A673 (cell line): ENCODE measurements at regions of chr1 and their contacts with region 1.

Region 1: DNA sequence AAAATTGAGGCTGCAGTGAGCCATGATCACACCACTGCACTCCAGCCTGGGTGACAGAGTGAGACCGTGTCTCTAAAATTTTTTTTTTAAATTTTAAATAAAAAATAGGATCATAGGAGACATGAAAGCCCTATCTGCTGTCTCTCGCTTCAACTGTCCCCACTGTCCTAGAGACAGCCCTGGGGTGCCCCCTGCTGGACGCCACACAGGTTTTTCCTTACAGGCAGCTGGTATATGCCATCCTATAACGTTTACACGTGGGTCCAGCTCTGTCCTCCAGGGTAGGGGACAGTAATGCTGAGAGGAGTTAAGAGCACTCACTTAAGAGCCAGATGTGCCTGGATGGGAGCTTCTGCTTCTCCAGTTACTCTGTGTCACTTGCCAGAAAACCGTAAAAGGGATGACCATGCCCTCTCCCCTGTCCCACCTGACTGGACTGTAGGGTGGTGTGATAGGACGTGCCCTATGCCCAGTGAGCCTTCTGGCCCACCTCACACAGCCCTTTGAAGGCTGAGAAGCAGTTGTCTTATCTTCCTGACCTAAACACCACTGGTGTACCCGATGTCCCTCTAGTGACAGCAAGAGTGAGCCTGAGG is 8.5 kb downstream of the FBXO2 start:
- DNase-seq: peak; percentile 90
- H3K4me3 ChIP-seq: no peak overlapping the region
- H3K27ac ChIP-seq: no peak overlapping the region
- H3K4me1 ChIP-seq: peaks cover 15% of the 10 kb centered on the region
- H3K27me3 ChIP-seq: peaks cover 2% of the 10 kb centered on the region
- CTCF ChIP-seq: peak; percentile 85

Region 2: DNA sequence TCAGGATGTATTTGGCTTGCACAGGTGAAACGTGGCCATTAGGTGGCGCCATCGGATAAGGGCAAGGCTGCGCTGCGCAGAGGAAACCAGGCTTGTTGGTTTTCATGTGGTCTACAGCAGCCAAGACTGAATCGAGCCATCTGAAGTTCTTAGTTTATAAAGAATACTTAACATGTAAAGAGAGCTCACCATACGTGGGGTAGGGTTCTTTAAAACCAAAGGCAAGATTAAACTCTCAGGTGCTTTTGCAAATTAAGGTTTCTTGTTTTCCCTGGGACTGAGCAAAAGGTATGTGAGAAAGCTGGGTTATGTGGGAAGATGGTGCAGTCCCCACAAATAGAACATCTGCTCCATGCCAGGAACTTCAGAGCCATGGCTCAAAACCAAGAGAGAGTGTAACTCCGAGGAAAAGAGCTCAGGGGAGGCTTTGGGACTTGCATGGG is 608.0 kb before region 1 on chr1:
- CTCF ChIA-PET with region 1: interaction called, 21 read pairs
- POLR2A ChIA-PET with region 1: no interaction called
- intact Hi-C with region 1: loop called (anchors 1 kb)
- DNase-seq: peak; percentile 90
- H3K4me3 ChIP-seq: no peak overlapping the region
- H3K27ac ChIP-seq: no peak overlapping the region
- H3K4me1 ChIP-seq: no peaks in the 10 kb centered on the region
- H3K27me3 ChIP-seq: no peaks in the 10 kb centered on the region
- CTCF ChIP-seq: peak; percentile 99

Region 3: DNA sequence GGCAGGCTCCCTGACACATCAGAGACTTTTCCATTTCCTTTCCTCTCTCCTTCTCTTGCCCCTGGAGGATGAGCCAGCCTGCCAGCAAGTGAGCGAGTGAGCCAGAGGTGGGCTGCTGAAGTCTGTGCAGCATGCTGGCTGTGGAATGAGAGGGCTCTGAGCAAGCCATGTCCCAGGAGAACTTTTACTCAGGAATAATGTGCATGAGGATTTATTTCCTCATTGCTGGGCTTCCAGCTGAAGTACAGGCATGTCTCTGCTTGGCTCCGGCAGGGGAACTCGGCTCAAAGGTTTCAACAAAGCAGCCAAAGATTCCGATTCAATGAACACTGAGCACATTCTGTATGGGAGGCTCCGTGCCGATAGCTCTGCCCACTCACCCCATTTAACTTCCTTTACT is 329.1 kb before region 1 on chr1:
- CTCF ChIA-PET with region 1: no interaction called
- POLR2A ChIA-PET with region 1: no interaction called
- intact Hi-C with region 1: loop called (anchors 5 kb)
- DNase-seq: no peak
- H3K4me3 ChIP-seq: no peak overlapping the region
- H3K27ac ChIP-seq: no peak overlapping the region
- H3K4me1 ChIP-seq: no peaks in the 10 kb centered on the region
- H3K27me3 ChIP-seq: peaks cover 5% of the 10 kb centered on the region
- CTCF ChIP-seq: no peak

Region 4: GRCh38 chr1:11337580-11338073 is 308.1 kb before region 1 on chr1:
- CTCF ChIA-PET with region 1: interaction called, 3 read pairs
- POLR2A ChIA-PET with region 1: no interaction called
- intact Hi-C with region 1: loop called (anchors 1 kb)
- DNase-seq: peak; percentile 70
- H3K4me3 ChIP-seq: no peak overlapping the region
- H3K27ac ChIP-seq: no peak overlapping the region
- H3K4me1 ChIP-seq: peaks cover under 1% of the 10 kb centered on the region
- H3K27me3 ChIP-seq: peaks cover 26% of the 10 kb centered on the region
- CTCF ChIP-seq: peak; percentile 93

Region 5: GRCh38 chr1:11478571-11479374 is 167.0 kb before region 1 on chr1 and contains the start of gene DISP3:
- CTCF ChIA-PET with region 1: no interaction called
- POLR2A ChIA-PET with region 1: no interaction called
- intact Hi-C with region 1: loop called (anchors 2 kb)
- DNase-seq: peak; percentile 92
- H3K4me3 ChIP-seq: peak within 1 kb of the TSS; percentile 54
- H3K27ac ChIP-seq: peak within 1 kb of the TSS; percentile 97
- H3K4me1 ChIP-seq: peaks cover 9% of the 10 kb centered on the region
- H3K27me3 ChIP-seq: peaks cover 80% of the 10 kb centered on the region
- CTCF ChIP-seq: peak; percentile 66
- total RNA-seq, gene DISP3: 0.49 and 0.79 TPM in 2 replicates

Region 6: DNA sequence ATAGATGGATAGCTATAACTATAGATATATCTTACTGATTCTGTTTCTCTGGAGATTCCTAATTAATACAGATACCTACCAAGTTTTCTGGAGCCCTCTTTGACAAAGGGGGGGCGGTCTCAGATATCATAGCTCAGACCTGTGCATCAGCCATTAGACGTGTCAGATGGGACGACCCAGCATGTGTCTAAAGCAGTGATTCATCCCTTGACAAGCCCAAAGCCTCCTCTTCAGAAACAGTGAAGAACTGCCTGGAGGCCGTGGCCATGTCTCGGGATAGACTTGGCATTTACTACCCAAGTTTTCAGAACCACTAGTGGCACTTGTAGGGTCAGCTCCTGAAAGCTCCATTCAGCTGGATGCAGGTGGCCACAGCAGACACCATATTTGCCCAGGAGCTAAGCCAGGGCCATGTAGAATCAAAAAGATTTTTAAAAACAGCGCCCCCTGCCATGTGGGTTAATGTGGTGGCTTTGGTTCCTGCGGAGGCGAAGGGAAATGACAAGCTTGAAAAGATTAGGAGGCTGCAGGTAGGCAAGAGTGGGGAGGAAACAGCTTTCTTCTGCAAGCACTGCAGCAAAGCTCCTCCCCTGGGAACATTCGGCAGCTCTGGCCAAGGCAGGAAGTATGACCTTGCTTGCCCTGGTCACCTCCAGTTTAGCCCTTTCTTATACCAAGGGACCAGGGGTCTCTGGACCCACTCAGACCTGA is 73.7 kb before region 1 on chr1:
- CTCF ChIA-PET with region 1: no interaction called
- POLR2A ChIA-PET with region 1: no interaction called
- intact Hi-C with region 1: no loop called
- DNase-seq: peak; percentile 15
- H3K4me3 ChIP-seq: no peak overlapping the region
- H3K27ac ChIP-seq: no peak overlapping the region
- H3K4me1 ChIP-seq: no peaks in the 10 kb centered on the region
- H3K27me3 ChIP-seq: peaks cover 56% of the 10 kb centered on the region
- CTCF ChIP-seq: peak; percentile 50

Region 7: DNA sequence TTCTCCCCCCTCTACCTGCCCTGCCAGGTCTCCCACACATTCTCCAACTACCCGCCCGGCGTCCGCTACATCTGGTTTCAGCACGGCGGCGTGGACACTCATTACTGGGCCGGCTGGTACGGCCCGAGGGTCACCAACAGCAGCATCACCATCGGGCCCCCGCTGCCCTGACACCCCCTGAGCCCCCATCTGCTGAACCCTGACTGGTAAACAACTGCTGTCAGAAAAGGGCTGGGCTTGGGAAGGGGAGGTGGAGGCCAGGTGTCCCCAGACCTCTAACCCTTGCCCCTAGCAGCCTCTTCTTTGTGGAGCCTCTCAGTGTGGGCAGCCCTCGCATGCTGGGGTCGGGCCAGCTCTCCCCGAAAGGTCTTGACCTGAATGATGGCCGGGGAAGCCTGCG is 15.3 kb after region 1 on chr1:
- CTCF ChIA-PET with region 1: interaction called, 23 read pairs
- POLR2A ChIA-PET with region 1: no interaction called
- intact Hi-C with region 1: no loop called
- DNase-seq: no peak
- H3K4me3 ChIP-seq: no peak overlapping the region
- H3K27ac ChIP-seq: no peak overlapping the region
- H3K4me1 ChIP-seq: no peaks in the 10 kb centered on the region
- H3K27me3 ChIP-seq: no peaks in the 10 kb centered on the region
- CTCF ChIP-seq: no peak

Region 8: DNA sequence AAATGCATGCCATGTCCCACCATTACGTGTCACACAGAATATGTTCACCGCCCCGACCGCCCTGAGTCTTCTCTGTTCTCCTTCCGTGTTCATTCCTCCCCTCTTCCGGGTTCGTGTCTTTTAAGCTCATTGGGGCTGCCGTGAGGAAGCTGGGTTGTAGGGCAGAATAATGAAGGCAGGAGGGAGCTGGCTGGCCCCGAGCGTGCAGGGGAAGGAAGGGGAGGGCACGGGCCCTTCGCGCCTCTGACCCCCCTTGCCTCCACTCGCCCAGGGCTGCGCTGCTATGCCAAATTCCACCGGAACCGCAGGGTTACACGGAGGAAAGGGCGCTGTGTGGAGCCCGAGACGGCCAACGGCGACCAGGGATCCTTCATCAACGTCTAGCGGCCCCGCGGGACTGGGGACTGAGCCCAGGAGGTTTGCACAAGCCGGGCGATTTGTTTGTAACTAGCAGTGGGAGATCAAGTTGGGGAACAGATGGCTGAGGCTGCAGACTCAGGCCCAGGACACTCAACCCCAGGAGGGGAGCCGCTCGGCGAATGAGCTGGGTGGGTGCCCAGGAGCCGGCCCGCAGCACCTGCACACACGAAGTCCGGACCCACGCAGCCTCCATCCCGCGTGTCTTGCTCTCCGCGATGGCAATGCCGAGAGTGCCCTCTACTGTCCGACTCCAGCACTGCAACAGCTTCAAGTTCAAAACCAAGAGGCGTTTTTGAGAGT is 73.7 kb after region 1 on chr1:
- CTCF ChIA-PET with region 1: interaction called, 6 read pairs
- POLR2A ChIA-PET with region 1: no interaction called
- intact Hi-C with region 1: loop called (anchors 2 kb)
- DNase-seq: peak; percentile 63
- H3K4me3 ChIP-seq: peak overlapping the region; percentile 23
- H3K27ac ChIP-seq: no peak overlapping the region
- H3K4me1 ChIP-seq: no peaks in the 10 kb centered on the region
- H3K27me3 ChIP-seq: no peaks in the 10 kb centered on the region
- CTCF ChIP-seq: peak; percentile 98